Activated CD4-positive, alpha-beta T cell treated with anti-CD3 and anti-CD28 coated beads, Interleukin-2, amount 10 ng/mL, durations not matched to agents 24 days and 14 days (primary cell): ENCODE measurements at regions of chr12 and their contacts with region 1.

Region 1: DNA sequence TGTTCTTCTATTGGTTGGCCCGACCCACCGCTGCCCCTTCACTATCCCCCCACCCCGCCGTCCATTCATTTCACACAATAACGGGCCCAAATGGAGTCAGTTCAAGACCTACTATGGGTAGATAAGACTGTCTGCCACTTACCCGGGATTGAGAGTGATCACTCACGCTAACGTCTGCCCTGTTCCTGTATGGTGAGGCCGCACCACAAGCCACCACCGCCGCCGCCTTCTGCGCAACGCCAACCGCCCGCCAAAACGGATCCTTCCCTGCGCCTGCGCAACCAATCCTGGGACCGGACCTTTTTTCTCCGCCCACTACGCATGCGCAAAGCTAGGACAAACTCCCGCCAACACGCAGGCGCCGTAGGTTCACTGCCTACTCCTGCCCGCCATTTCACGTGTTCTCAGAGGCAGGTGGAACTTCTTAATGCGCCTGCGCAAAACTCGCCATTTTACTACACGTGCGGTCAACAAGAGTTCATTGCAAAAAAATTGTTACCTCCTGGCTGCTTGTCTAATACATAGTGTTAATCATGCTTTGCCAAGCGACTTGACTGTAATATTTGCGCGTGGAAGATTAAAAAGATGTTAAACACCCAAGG is at the start of gene CBX5:
- DNase-seq: peak; percentile 100
- H3K4me3 Mint-ChIP-seq: no peak within 1 kb of the TSS
- H3K27ac Mint-ChIP-seq: no peak within 1 kb of the TSS
- H3K4me1 Mint-ChIP-seq: peaks cover 50% of the 10 kb centered on the region
- H3K27me3 Mint-ChIP-seq: no peaks in the 10 kb centered on the region
- total RNA-seq, gene CBX5: 108 and 113 TPM in 2 replicates

Region 2: GRCh38 chr12:54214553-54215406 is 65.2 kb before region 1 on chr12:
- intact Hi-C with region 1: loop called (anchors 2 kb)
- DNase-seq: peak; percentile 97
- H3K4me3 Mint-ChIP-seq: peak overlapping the region; percentile 85
- H3K27ac Mint-ChIP-seq: no peak overlapping the region
- H3K4me1 Mint-ChIP-seq: peaks cover 20% of the 10 kb centered on the region
- H3K27me3 Mint-ChIP-seq: peaks cover 30% of the 10 kb centered on the region

Region 3: GRCh38 chr12:54240971-54241588 is 38.9 kb before region 1 on chr12:
- intact Hi-C with region 1: loop called (anchors 2 kb)
- DNase-seq: peak; percentile 61
- H3K4me3 Mint-ChIP-seq: peak overlapping the region; percentile 8
- H3K27ac Mint-ChIP-seq: peak overlapping the region; percentile 90
- H3K4me1 Mint-ChIP-seq: peaks cover 21% of the 10 kb centered on the region
- H3K27me3 Mint-ChIP-seq: no peaks in the 10 kb centered on the region

Region 4: DNA sequence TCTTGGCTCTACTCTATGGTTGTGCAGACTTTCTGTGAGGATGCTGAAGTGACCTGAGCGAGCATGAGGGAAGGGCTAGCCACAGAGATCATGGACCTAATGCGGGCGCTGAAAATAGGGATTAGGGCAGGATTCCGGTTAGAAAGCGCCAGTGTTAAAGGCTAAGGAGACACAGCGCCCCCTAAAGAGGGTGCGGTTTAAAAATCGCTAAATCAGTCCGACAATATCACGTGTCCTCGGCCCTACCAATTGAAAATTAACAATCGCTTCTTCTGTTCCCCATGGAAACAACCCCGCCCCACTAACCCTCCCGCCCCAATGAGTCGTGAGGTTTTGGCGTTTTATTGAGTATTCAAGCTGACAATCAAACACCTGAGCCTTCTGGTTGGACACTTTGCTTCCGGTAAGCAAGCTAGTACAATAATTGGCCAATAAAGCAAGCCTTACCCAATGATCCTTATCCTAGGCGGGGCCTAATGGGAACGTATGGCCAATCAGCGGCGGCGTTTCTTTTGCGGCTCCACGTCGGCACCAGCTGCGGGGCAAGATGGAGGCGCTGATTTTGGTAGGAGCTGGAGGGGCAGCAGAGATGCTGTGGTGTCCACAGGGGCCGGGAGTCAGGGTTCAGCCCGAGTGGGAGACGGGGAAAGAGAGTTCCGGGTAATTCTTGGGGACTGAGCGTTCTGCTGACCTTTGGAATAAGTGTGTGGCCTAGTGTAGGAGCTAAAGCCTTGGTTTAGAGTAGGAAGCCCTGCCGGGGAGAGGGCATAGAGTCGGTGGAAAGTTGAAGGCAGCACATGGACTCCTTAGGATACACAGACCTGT is 44.9 kb after region 1 on chr12 and contains the start of gene COPZ1:
- intact Hi-C with region 1: loop called (anchors 1 kb)
- DNase-seq: peak; percentile 97
- H3K4me3 Mint-ChIP-seq: peak within 1 kb of the TSS; percentile 98
- H3K27ac Mint-ChIP-seq: peak within 1 kb of the TSS; percentile 93
- H3K4me1 Mint-ChIP-seq: peaks cover 23% of the 10 kb centered on the region
- H3K27me3 Mint-ChIP-seq: no peaks in the 10 kb centered on the region
- total RNA-seq, gene COPZ1: 116 and 121 TPM in 2 replicates

Region 5: GRCh38 chr12:54359033-54359761 is 79.2 kb after region 1 on chr12:
- intact Hi-C with region 1: loop called (anchors 1 kb)
- DNase-seq: peak; percentile 98
- H3K4me3 Mint-ChIP-seq: no peak overlapping the region
- H3K27ac Mint-ChIP-seq: no peak overlapping the region
- H3K4me1 Mint-ChIP-seq: peaks cover 28% of the 10 kb centered on the region
- H3K27me3 Mint-ChIP-seq: no peaks in the 10 kb centered on the region

Region 6: DNA sequence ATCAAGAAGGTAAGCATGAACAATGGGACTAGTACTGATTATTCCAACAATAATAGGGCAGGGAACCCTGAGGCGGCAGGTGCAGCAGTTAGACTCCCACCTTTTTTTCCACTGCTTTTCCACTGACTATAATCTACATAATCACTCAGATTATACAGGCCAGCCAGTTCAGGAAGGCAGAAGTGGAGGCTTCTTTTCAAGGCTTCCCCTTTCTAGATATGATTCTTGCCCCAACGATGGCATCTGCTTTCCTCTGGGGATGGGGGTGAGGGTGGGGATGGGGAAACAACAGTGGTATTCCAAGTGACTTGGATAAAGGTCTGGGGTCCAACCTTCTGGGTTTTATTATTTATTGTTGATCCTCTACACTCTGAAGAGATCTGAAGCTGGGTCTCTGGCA is 217.9 kb after region 1 on chr12:
- intact Hi-C with region 1: loop called (anchors 1 kb)
- DNase-seq: no peak
- H3K4me3 Mint-ChIP-seq: peak overlapping the region; percentile 93
- H3K27ac Mint-ChIP-seq: peak overlapping the region; percentile 95
- H3K4me1 Mint-ChIP-seq: peaks cover 34% of the 10 kb centered on the region
- H3K27me3 Mint-ChIP-seq: no peaks in the 10 kb centered on the region

Region 7: GRCh38 chr12:54616933-54617680 is 337.1 kb after region 1 on chr12:
- intact Hi-C with region 1: no loop called
- DNase-seq: no peak
- H3K4me3 Mint-ChIP-seq: no peak overlapping the region
- H3K27ac Mint-ChIP-seq: no peak overlapping the region
- H3K4me1 Mint-ChIP-seq: no peaks in the 10 kb centered on the region
- H3K27me3 Mint-ChIP-seq: peaks cover 46% of the 10 kb centered on the region

Region 8: GRCh38 chr12:54984658-54985376 is 704.9 kb after region 1 on chr12 and contains the start of gene TESPA1:
- intact Hi-C with region 1: loop called (anchors 10 kb)
- DNase-seq: peak; percentile 95
- H3K4me3 Mint-ChIP-seq: peak within 1 kb of the TSS; percentile 86
- H3K27ac Mint-ChIP-seq: peak within 1 kb of the TSS; percentile 97
- H3K4me1 Mint-ChIP-seq: peaks cover 61% of the 10 kb centered on the region
- H3K27me3 Mint-ChIP-seq: no peaks in the 10 kb centered on the region
- total RNA-seq, gene TESPA1: 164 and 168 TPM in 2 replicates